ENCODE measurements at regions of chr1 and their contacts with region 1.

Region 1: GRCh38 chr1:108877348-108878159 is 769 bp downstream of the GPSM2 start:
- DNase-seq: peak; percentile 43
- H3K4me3 ChIP-seq: peak overlapping the region; percentile 94
- H3K27ac ChIP-seq: peak overlapping the region; percentile 48
- H3K4me1 ChIP-seq: peaks cover 11% of the 10 kb centered on the region
- CTCF ChIP-seq: no peak

Region 2: DNA sequence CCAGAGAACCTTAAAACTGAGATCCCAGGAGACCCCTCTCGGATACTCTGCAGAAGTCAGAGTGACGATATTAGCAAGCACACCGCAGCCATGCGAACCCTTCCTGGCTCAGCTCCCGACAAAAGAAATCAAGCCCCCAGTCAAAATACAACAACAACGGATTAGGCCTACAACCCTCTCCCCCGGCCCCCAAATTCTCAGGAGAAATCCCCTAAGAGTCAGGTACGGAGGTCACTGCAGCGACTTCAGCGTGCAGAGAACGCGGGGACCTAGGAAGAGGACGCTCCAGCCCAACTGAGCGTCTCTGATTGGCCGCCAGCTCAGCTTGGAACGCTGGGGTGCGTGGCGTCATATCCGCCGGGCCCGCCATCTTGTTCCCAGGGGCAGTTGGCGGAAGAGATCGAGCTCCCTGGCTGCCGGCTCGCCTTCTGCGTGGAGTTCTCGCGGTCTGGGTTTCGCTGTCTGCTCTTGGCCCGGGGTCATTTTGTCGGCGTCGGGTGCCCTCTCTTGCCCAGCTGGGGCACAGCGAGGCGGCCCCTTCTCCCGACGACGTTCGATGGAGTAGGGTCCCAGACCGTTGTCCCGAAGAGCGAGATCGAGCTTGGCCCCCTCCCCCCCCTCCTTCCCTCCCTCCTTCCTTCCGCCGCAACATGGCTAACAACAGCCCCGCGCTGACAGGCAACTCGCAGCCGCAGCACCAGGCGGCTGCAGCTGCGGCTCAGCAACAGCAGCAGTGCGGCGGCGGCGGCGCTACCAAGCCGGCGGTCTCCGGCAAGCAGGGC is 185.4 kb before region 1 on chr1 and contains the start of gene PRPF38B:
- CTCF ChIA-PET with region 1: no interaction called
- POLR2A ChIA-PET with region 1: no interaction called
- intact Hi-C with region 1: loop called (anchors 2 kb)
- DNase-seq: peak; percentile 94
- H3K4me3 ChIP-seq: peak within 1 kb of the TSS; percentile 97
- H3K27ac ChIP-seq: peak within 1 kb of the TSS; percentile 83
- H3K4me1 ChIP-seq: peaks cover 28% of the 10 kb centered on the region
- CTCF ChIP-seq: no peak
- total RNA-seq, gene PRPF38B: 37.7 and 47.4 TPM in 2 replicates

Region 3: GRCh38 chr1:108746372-108747205 is 131.0 kb before region 1 on chr1 and contains the start of gene STXBP3:
- CTCF ChIA-PET with region 1: no interaction called
- POLR2A ChIA-PET with region 1: no interaction called
- intact Hi-C with region 1: loop called (anchors 5 kb)
- DNase-seq: peak; percentile 99
- H3K4me3 ChIP-seq: peak within 1 kb of the TSS; percentile 88
- H3K27ac ChIP-seq: peak within 1 kb of the TSS; percentile 56
- H3K4me1 ChIP-seq: peaks cover 3% of the 10 kb centered on the region
- CTCF ChIP-seq: peak; percentile 93
- total RNA-seq, gene STXBP3: 27.7 and 28.3 TPM in 2 replicates

Region 4: GRCh38 chr1:108963052-108963686 is 85.6 kb after region 1 on chr1 and contains the start of gene CLCC1:
- CTCF ChIA-PET with region 1: no interaction called
- POLR2A ChIA-PET with region 1: no interaction called
- intact Hi-C with region 1: loop called (anchors 5 kb)
- DNase-seq: peak; percentile 95
- H3K4me3 ChIP-seq: peak within 1 kb of the TSS; percentile 72
- H3K27ac ChIP-seq: peak within 1 kb of the TSS; percentile 76
- H3K4me1 ChIP-seq: peaks cover 17% of the 10 kb centered on the region
- CTCF ChIP-seq: no peak
- total RNA-seq, gene CLCC1: 8.7 and 9.8 TPM in 2 replicates

Region 5: DNA sequence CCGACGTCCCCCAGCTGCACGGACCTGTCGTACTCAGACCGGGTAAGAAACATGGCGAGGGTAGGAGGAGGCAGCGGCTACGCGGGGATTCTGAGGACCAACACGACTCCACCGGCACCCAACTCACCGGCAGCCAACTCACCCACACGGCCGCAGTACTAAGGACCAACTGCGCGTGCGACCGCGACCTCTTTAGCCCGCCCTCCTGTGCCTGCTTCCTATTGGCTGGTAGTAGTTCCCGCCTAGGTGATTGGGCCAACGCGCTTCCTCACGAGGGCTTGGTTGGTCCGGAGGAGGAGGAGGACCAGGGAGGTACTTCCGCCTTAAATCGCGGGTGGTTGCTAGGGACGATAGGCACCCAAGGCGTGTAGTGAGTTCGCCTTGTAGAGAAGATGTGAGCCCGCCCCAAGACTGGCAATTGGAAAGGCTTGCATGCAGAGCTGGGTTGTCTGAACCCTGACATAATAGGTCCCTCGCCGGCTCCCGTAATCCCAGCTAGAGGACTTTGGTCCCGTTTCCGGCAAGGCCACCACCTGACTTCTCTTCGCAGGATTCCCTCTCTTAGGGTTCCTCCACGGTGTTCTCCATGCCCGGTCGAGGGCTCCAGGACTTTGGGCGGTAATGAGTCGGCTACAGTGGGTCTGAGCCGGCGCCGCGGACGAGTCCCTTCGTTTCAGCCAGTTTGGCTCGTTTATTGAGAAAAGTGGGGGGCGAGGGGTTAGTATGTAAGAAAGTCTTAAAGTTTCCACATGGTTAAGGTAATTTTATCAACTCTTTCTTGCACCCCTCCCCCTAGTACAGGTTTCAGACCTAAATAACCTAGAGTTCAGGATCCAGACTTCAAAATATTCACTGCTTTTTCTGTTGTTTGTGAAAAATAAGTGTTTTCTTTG is 549.0 kb after region 1 on chr1 and contains the start of gene PSMA5:
- CTCF ChIA-PET with region 1: no interaction called
- POLR2A ChIA-PET with region 1: no interaction called
- intact Hi-C with region 1: no loop called
- DNase-seq: peak; percentile 99
- H3K4me3 ChIP-seq: peak within 1 kb of the TSS; percentile 97
- H3K27ac ChIP-seq: peak within 1 kb of the TSS; percentile 85
- H3K4me1 ChIP-seq: peaks cover 25% of the 10 kb centered on the region
- CTCF ChIP-seq: no peak
- total RNA-seq, gene PSMA5: 46.3 and 53.3 TPM in 2 replicates

Measured in OCI-LY7 (cell line).